ENCODE measurements at regions of chr3 and their contacts with region 1.

Region 1: GRCh38 chr3:30693470-30694120 is 87.2 kb downstream of the TGFBR2 start:
- DNase-seq: peak; percentile 45
- CTCF ChIP-seq: peak; percentile 57

Region 2: DNA sequence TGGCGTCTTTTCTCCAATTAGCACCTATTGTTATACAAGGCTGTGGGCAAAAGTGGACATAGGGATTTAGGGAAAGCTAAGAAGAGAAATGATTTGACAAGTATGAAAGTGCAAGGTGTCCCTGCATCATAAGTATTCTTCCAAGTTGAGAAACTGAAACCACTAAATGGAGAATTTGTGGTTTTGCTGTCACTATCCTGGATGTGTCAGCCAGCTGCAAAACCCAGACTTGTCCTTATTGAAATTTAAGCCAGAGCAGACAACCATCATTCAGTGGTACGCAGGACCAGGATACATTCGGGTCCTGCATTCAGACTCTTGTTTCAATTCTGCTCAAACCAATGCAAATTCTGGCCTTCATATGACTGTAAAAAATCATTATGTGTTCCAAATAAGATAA is 472.0 kb before region 1 on chr3:
- in situ Hi-C with region 1: loop called (anchors 25 kb)
- DNase-seq: no peak
- CTCF ChIP-seq: no peak

Measured in GM13976 (cell line).